K562 (cell line): ENCODE measurements at regions of chr1 and their contacts with region 1.

Region 1: DNA sequence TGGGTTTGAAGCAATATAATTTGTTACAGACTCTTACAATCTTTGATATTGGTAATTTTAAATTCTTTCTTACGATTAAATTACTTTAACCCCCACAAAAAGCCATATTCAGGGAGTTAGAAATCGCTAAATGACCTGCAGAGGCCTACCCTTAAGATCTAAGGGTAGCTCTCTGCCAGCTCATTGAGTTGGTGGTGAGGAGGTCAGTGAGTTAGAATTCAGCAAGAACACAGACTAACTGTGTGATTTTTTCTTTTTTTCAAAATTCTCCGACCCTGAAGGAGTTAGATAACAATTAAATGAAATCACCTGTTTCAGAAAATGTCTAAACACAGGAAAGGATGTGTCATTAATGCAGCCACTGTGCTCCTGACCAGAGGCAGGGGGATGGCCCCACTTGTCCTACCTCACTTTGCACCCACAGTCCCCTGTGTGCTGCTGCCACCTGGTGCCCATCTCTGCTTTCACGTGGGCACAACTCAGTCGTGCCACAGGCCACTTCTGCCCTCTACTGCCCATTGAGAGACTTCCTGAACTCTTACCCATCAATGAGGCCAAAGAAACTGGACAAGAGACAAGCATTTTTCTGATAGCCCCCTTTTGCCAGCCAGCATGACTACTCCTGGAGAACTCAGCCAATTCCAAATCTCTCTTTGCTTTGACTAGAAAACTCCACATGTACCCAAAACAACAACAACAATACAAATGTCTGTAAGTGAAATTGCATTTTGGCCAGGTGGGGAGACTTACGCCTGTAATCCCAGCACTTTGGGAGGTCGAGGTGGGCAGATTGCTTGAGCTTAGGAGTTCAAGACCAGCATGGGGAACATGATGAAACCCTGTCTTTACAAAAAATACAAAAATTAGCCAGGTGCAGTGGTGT is 8.4 kb downstream of the CFAP45 start:
- DNase-seq: peak in 1 of 4 experiments; percentile 54
- ATAC-seq: peak; percentile 48
- H3K4me3 ChIP-seq: no peak overlapping the region
- H3K27ac ChIP-seq: no peak overlapping the region
- H3K4me1 ChIP-seq: peaks cover 4 to 24% of the 10 kb centered on the region in 2 experiments; a peak in 4 of 5 replicates
- H3K27me3 ChIP-seq: 0 out of 5 replicates have a peak, but pooled peaks cover 0 to 4% of the 10 kb centered on the region in 2 experiments
- CTCF ChIP-seq: peak; percentile 84 to 99 (median 98)
- EP300 ChIP-seq: no peak
- POLR2A ChIP-seq: no peak
- RAD21 ChIP-seq: peak; percentile 91 to 93

Region 2: GRCh38 chr1:159798893-159799292 is 92.6 kb before region 1 on chr1:
- CTCF ChIA-PET with region 1: interaction called, 36 read pairs
- POLR2A ChIA-PET with region 1: interaction called, 3 read pairs
- in situ Hi-C with region 1: no loop called
- intact Hi-C with region 1: loop called (anchors 1 kb)
- DNase-seq: peak; percentile 66 to 67 (median 66)
- ATAC-seq: peak; percentile 94
- H3K4me3 ChIP-seq: no peak overlapping the region
- H3K27ac ChIP-seq: no peak overlapping the region
- H3K4me1 ChIP-seq: no peaks in the 10 kb centered on the region
- H3K27me3 ChIP-seq: peaks cover 27 to 37% of the 10 kb centered on the region in 2 experiments
- CTCF ChIP-seq: peak; percentile 75 to 87 (median 76)
- EP300 ChIP-seq: no peak
- POLR2A ChIP-seq: no peak
- RAD21 ChIP-seq: peak; percentile 75 to 89

Region 3: GRCh38 chr1:159835862-159836525 is 55.5 kb before region 1 on chr1:
- CTCF ChIA-PET with region 1: interaction called, 14 read pairs
- POLR2A ChIA-PET with region 1: interaction called, 4 read pairs
- in situ Hi-C with region 1: no loop called
- intact Hi-C with region 1: loop called (anchors 2 kb)
- DNase-seq: peak in 2 of 4 experiments; percentile 16 to 26
- ATAC-seq: peak; percentile 52; the same call in 2 of the 3 replicates
- H3K4me3 ChIP-seq: no peak overlapping the region
- H3K27ac ChIP-seq: no peak overlapping the region
- H3K4me1 ChIP-seq: peaks cover 0 to 3% of the 10 kb centered on the region in 2 experiments; a peak in 1 of 5 replicates
- H3K27me3 ChIP-seq: peaks cover 7 to 32% of the 10 kb centered on the region in 2 experiments
- CTCF ChIP-seq: peak; percentile 30 to 59 (median 48); a peak in 5 of 6 replicates
- EP300 ChIP-seq: no peak
- POLR2A ChIP-seq: no peak
- RAD21 ChIP-seq: peak; percentile 48 to 66

Region 4: DNA sequence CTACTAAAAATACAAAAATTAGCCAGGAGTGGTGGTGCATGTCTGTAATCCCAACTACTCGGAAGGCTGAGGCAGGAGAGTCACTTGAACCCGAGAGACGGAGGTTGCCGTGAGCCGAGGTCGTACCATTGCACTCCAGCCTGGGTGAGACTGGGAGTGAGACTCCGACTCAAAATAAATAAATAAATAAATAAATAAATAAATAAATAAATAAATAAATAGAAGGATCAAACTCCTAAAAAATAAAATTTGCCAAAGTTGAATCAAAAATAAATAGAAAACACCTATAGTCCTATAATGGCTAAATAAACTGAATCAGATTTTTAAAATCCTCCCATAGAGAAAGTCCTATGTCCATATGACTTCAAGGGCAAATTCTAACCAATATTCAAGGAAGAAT is 408.7 kb after region 1 on chr1:
- CTCF ChIA-PET with region 1: no interaction called
- POLR2A ChIA-PET with region 1: no interaction called
- in situ Hi-C with region 1: no loop called
- intact Hi-C with region 1: no loop called
- DNase-seq: no peak
- ATAC-seq: no peak
- H3K4me3 ChIP-seq: no peak overlapping the region
- H3K27ac ChIP-seq: no peak overlapping the region
- H3K4me1 ChIP-seq: no peaks in the 10 kb centered on the region
- H3K27me3 ChIP-seq: no peaks in the 10 kb centered on the region
- CTCF ChIP-seq: no peak
- EP300 ChIP-seq: no peak
- POLR2A ChIP-seq: no peak
- RAD21 ChIP-seq: no peak